H1 (cell line): ENCODE measurements at regions of chr13 and their contacts with region 1.

Region 1: DNA sequence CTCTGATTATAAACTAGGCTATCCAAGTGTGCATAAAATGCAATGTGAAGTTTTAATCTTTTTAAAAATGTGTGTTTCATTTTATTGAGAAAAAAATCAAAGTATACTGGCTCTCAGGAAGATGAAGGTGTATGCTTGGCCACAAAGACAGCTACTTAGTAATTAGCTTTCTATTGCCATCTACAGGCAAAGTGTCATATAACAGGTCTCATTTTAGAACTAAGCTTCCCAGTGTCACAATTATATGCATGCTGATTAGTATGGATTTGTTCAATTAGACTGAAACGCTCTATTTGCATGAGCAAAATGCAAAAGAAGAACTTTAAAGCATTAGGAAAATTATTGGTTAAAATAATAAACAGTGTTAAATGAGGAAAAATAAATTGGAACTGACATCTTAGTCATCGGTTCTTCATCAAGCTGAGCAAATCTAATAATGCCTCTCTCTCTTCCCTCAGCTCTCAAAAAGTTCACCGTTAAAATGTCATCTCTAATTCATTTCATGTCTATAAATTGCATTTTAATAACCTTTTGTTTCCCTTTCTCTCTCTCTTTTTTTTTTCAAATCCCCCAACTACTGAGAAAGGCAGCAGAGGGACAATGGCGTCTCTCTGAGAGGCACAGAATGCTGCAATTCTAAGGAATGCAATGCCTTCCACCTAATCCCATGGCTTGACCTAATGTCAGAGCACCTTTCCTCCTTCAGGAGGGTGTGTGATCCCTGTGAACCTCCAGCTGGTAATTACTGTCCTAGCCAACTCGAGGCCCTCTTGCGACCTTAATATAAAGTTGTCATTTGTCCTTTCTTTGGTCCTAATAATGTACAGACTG is 313.1 kb upstream of the MAB21L1 start:
- DNase-seq: no peak
- H3K4me3 ChIP-seq: no peak overlapping the region
- H3K27ac ChIP-seq: no peak overlapping the region
- H3K4me1 ChIP-seq: no peaks in the 10 kb centered on the region
- H3K27me3 ChIP-seq: no peaks in the 10 kb centered on the region
- CTCF ChIP-seq: peak in 2 of 3 experiments; percentile 28 to 49; a peak in 2 of 4 replicates
- EP300 ChIP-seq: no peak
- POLR2A ChIP-seq: no peak
- RAD21 ChIP-seq: peak; percentile 58 to 64

Region 2: DNA sequence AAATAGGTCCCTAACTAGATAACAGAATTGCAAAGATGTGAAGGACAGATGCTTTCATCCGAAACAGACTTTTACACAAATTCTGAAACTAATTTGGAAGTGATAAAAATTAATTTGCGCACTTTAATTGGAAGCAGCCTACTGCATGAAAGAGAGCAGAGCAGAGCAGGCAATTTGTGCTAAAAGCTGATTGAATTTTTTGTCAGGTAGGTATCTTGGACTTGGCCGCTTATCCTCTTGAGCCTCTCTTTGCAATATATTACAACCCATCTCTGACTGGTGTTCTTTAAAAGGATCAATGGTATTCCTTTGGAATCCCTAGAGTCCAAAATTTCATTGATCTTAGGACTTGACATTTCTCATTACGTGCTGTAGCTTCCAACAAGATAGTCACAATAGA is 129.8 kb before region 1 on chr13:
- CTCF ChIA-PET with region 1: interaction called, 13 read pairs
- POLR2A ChIA-PET with region 1: no interaction called
- DNase-seq: no peak
- H3K4me3 ChIP-seq: no peak overlapping the region
- H3K27ac ChIP-seq: no peak overlapping the region
- H3K4me1 ChIP-seq: no peaks in the 10 kb centered on the region
- H3K27me3 ChIP-seq: no peaks in the 10 kb centered on the region
- CTCF ChIP-seq: no peak
- EP300 ChIP-seq: no peak
- POLR2A ChIP-seq: no peak
- RAD21 ChIP-seq: no peak

Region 3: GRCh38 chr13:35720690-35721554 is 68.6 kb before region 1 on chr13:
- CTCF ChIA-PET with region 1: interaction called, 17 read pairs
- POLR2A ChIA-PET with region 1: no interaction called
- DNase-seq: peak; percentile 60 to 93
- H3K4me3 ChIP-seq: no peak overlapping the region
- H3K27ac ChIP-seq: no peak overlapping the region
- H3K4me1 ChIP-seq: no peaks in the 10 kb centered on the region
- H3K27me3 ChIP-seq: no peaks in the 10 kb centered on the region
- CTCF ChIP-seq: peak; percentile 94 to 98 (median 96)
- EP300 ChIP-seq: no peak
- POLR2A ChIP-seq: no peak
- RAD21 ChIP-seq: peak; percentile 99

Region 4: DNA sequence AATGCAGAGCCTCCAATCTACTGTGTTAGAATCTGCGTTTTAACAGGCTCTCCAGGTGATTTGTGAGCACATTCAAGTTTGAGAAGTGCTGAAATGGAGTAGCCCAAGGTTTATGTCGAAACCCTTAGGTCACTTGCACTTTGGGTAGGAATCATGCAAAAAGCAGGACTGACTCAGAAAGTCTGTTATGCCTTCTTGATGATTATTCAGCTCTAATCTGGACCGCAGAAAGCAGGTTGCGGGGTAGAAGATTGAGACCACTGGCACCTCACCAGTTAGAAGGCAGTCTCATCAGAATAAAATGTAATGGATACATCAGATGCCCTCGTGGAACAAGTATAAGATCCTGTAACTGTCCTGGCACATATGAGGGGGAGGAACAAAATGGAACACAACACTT is 15.4 kb after region 1 on chr13:
- CTCF ChIA-PET with region 1: interaction called, 34 read pairs
- POLR2A ChIA-PET with region 1: interaction called, 3 read pairs
- DNase-seq: no peak
- H3K4me3 ChIP-seq: no peak overlapping the region
- H3K27ac ChIP-seq: no peak overlapping the region
- H3K4me1 ChIP-seq: no peaks in the 10 kb centered on the region
- H3K27me3 ChIP-seq: no peaks in the 10 kb centered on the region
- CTCF ChIP-seq: no peak
- EP300 ChIP-seq: no peak
- POLR2A ChIP-seq: no peak
- RAD21 ChIP-seq: no peak

Region 5: GRCh38 chr13:35812736-35813135 is 23.2 kb after region 1 on chr13:
- CTCF ChIA-PET with region 1: interaction called, 10 read pairs
- POLR2A ChIA-PET with region 1: no interaction called
- DNase-seq: no peak
- H3K4me3 ChIP-seq: no peak overlapping the region
- H3K27ac ChIP-seq: no peak overlapping the region
- H3K4me1 ChIP-seq: no peaks in the 10 kb centered on the region
- H3K27me3 ChIP-seq: no peaks in the 10 kb centered on the region
- CTCF ChIP-seq: no peak
- EP300 ChIP-seq: no peak
- POLR2A ChIP-seq: no peak
- RAD21 ChIP-seq: no peak

Region 6: DNA sequence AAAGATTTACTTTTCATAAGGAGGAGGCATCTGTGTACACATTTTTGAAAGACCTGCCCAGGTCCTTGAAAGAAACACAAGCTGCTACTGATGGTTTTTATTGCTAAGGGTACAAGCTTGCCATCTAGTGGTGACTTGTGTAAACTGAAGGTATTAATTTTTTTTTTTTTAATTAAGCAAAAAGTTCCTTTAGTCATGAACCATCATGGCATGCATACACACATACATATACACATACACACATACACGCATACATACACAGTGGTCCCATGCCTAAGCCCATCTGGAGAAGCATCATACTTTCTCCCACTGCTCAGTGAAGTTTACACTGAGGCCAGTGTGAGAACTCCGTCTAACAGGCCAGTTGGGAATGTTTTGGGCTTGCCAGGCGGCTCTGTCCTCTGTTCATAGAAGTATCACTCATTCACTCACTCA is 29.1 kb after region 1 on chr13:
- CTCF ChIA-PET with region 1: interaction called, 13 read pairs
- POLR2A ChIA-PET with region 1: no interaction called
- DNase-seq: no peak
- H3K4me3 ChIP-seq: no peak overlapping the region
- H3K27ac ChIP-seq: no peak overlapping the region
- H3K4me1 ChIP-seq: peaks cover 0 to 4% (median 4%) of the 10 kb centered on the region in 4 experiments; a peak in 3 of 7 replicates
- H3K27me3 ChIP-seq: no peaks in the 10 kb centered on the region; a peak in 1 of 7 replicates
- CTCF ChIP-seq: peak in 2 of 3 experiments; percentile 30 to 46; a peak in 2 of 4 replicates
- EP300 ChIP-seq: no peak
- POLR2A ChIP-seq: no peak
- RAD21 ChIP-seq: peak; percentile 56 to 61

Region 7: GRCh38 chr13:36046672-36047071 is 257.1 kb after region 1 on chr13:
- CTCF ChIA-PET with region 1: no interaction called
- POLR2A ChIA-PET with region 1: no interaction called
- DNase-seq: no peak
- H3K4me3 ChIP-seq: no peak overlapping the region
- H3K27ac ChIP-seq: no peak overlapping the region
- H3K4me1 ChIP-seq: no peaks in the 10 kb centered on the region
- H3K27me3 ChIP-seq: no peaks in the 10 kb centered on the region
- CTCF ChIP-seq: no peak
- EP300 ChIP-seq: no peak
- POLR2A ChIP-seq: no peak
- RAD21 ChIP-seq: no peak